ENCODE measurements at regions of chr12 and their contacts with region 1.

Region 1: DNA sequence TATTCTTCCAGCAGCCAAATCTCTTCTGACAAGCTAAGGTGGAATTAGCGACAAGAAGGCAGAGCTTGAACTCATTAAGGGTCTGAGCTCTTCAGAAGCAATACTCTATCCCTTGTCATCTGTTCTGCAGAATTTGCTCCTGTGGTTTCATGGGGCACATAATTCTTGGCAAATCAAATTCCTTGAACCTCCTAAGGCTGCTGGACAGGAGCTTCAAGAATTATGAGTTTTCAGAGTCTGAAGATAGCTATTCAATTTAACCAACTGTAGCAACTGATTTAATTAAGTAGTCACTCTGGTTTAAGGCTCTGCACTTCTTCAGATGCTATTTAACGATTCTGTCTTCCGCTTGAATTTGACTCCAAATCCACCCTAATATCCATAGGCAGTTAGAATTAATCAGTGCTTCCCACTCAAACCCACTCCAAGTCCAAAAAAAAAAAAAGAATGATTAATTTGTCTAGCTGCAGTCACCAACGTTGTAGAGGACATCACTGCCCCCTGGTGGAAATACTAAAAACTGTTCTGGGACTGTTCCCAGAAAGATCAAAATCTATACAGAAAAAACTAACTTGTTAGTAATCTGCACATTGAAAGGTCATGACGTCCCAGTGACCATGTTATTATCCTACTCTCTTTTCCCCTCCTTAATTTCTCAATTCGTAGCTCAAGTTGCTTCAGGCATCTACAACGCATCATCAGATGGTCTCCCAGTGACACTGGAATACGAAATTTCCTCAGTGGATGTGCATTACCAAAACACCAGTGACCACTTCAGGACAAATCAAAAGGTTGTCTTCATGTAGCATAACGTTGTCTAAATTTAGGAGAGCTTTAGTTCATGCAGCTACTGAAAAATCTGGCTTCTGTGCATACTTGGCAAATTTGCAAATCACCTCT is 169.8 kb downstream of the KIF21A start:
- DNase-seq: peak; percentile 38
- H3K4me3 ChIP-seq: no peak overlapping the region
- H3K27ac ChIP-seq: no peak overlapping the region
- H3K4me1 ChIP-seq: no peaks in the 10 kb centered on the region
- CTCF ChIP-seq: peak; percentile 88

Region 2: DNA sequence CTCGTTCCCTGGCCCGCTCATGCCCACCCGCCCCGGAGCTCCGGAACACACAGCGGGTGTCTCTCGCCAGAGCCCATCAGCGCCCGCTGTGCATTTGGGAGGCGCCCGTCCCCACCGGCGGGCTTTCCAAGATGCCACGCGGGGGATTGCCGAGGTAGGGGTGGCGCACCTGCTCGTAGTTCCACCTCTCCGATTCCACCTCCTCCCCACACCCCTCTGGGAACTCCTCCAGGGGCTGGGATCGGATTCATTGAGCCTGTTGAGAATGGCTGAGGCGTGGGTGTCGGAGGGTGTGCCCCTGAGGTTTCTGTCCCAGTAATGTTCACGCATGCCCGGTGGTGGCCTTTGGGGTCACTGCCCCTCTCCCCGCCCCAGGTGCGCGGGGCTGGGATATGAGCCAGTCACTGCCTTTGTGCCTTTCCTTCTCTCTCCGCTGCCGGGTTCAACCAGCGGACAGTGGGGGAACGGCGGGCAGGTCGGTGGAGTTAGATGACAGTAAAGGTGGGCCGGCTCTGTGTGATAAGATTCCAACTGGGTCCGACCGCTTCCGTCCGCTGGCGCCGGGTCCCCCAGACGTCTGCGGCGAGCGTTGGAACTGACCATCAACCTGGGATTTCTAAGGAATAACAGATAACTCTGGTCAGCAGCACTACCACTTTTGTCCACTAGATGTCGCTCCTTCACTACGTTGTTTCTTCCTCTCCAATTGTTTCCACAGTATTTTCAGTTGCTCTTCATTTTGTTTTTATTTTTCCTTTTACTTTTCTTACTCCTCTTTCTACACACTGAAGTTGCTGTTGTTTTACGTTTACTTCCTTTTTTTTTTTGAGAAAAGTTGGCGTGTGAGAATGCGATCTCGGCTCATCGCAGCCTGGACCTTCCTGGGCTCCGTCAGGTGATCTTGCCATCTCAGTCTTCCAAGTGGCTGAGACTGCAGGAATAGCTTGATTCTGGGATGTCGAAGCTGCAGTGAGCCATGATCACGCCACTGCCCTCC is 1134.6 kb before region 1 on chr12:
- CTCF ChIA-PET with region 1: no interaction called
- POLR2A ChIA-PET with region 1: no interaction called
- intact Hi-C with region 1: loop called (anchors 10 kb)
- DNase-seq: peak; percentile 49
- H3K4me3 ChIP-seq: no peak overlapping the region
- H3K27ac ChIP-seq: no peak overlapping the region
- H3K4me1 ChIP-seq: no peaks in the 10 kb centered on the region
- CTCF ChIP-seq: peak; percentile 89

Region 3: DNA sequence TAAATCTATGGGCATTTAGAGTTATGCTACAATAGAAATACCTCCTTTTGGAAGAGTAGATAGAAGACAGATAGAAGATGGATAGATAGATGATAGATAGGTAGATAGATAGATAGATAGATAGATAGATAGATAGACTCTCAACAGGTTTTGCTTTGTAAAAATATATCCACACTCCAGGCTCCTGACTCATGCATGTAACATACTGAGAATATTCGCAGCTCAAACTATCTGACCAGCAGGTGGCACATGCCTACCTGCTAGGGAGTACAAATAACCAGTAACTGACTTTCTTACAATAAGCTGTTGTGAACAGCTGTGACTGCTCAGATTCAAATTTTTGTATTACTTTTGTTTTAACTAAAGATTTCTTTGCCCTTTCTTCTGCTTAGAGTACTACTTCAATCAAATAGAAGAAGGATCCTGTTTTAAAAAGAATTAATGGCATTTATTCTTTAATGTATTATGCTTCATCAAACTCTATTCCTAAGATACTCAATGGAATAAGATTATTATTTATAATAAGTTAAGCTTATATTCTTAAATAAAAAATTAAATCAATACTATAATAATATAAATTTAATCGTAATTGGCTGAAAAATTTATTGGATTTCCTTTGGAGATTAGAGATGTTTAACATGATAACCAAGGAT is 352.0 kb before region 1 on chr12:
- CTCF ChIA-PET with region 1: no interaction called
- POLR2A ChIA-PET with region 1: no interaction called
- intact Hi-C with region 1: loop called (anchors 5 kb)
- DNase-seq: peak; percentile 43
- H3K4me3 ChIP-seq: no peak overlapping the region
- H3K27ac ChIP-seq: no peak overlapping the region
- H3K4me1 ChIP-seq: no peaks in the 10 kb centered on the region
- CTCF ChIP-seq: peak; percentile 77

Region 4: DNA sequence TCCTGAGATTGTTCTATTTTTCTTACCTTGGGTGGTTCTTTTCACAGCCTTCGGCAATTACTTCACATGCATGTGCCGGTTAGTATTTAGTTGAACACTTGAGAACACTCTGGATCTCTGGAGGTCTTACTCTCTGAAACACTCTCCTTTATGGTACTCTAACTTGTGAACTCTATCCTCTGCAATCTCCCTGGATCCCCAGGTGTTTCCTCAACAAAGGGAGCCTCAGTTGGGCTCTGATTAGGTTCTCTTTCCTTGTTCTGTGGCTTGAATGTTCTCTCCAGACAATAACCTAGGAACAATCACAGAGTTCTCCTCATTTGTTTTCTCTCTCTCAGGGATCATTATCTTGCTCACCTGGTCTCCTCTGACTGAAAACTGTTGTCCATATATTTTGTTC is 387.0 kb after region 1 on chr12:
- CTCF ChIA-PET with region 1: no interaction called
- POLR2A ChIA-PET with region 1: no interaction called
- intact Hi-C with region 1: no loop called
- DNase-seq: no peak
- H3K4me3 ChIP-seq: no peak overlapping the region
- H3K27ac ChIP-seq: no peak overlapping the region
- H3K4me1 ChIP-seq: no peaks in the 10 kb centered on the region
- CTCF ChIP-seq: no peak

Measured in OCI-LY7 (cell line).